ENCODE measurements at regions of chr5 and their contacts with region 1.

Region 1: GRCh38 chr5:141597394-141597793 is 21.4 kb downstream of the DIAPH1 start:
- DNase-seq: no peak
- H3K4me3 ChIP-seq: no peak overlapping the region
- H3K27ac ChIP-seq: no peak overlapping the region
- H3K4me1 ChIP-seq: peaks cover 0 to 36% (median 7%) of the 10 kb centered on the region in 4 donors
- H3K27me3 ChIP-seq: no peaks in the 10 kb centered on the region
- CTCF ChIP-seq: no peak
- EP300 ChIP-seq: no peak
- POLR2A ChIP-seq: no peak

Region 2: DNA sequence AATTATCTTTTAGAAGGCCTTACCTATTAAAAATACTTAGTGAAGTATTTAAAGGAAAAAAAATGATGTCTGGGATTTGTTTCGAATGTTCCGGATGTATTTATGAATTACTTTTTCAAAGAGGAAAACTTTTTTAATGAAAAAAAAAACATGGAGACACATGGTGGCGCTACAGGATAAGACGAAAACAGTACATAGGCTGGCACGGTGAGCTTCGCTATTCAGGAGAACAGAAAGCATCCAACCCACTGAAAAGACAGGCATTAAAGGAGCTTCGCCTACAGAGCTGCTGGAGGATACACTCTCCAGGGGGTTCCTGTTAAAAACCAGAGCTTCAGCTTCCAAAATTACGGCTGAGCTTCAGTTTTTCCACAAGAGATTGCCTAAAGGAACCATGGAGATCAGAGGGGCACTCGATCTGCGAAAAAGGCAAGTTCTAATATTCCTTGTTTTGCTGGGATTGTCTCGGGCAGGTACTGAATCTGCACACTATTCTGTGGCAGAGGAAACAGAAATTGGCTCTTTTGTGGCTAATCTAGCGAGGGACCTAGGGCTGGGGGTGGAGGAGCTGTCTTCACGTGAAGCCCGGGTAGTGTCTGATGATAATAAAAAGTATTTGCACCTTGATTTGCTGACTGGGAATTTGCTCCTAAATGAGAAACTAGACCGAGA is 374.1 kb before region 1 on chr5 and contains the start of gene PCDHB14:
- intact Hi-C with region 1: no loop called
- DNase-seq: no peak
- H3K4me3 ChIP-seq: peak within 1 kb of the TSS; percentile 27 to 44 (median 37)
- H3K27ac ChIP-seq: peak within 1 kb of the TSS in 1 of 4 donors; percentile 20
- H3K4me1 ChIP-seq: no peaks in the 10 kb centered on the region
- H3K27me3 ChIP-seq: no peaks in the 10 kb centered on the region
- CTCF ChIP-seq: peak in 1 of 3 experiments; percentile 16
- EP300 ChIP-seq: no peak
- POLR2A ChIP-seq: no peak
- total RNA-seq, gene PCDHB14: 6.8 to 9.9 (median 8.3) TPM

Region 3: GRCh38 chr5:141618804-141619554 is 21.6 kb after region 1 on chr5 and contains the start of gene DIAPH1:
- intact Hi-C with region 1: loop called (anchors 1 kb)
- DNase-seq: peak; percentile 99
- H3K4me3 ChIP-seq: peak within 1 kb of the TSS; percentile 75 to 93 (median 88)
- H3K27ac ChIP-seq: peak within 1 kb of the TSS; percentile 83 to 93 (median 91)
- H3K4me1 ChIP-seq: peaks cover 24 to 36% (median 30%) of the 10 kb centered on the region in 4 donors
- H3K27me3 ChIP-seq: no peaks in the 10 kb centered on the region
- CTCF ChIP-seq: peak; percentile 99 to 100 (median 100)
- EP300 ChIP-seq: no peak
- POLR2A ChIP-seq: peak; percentile 80
- total RNA-seq, gene DIAPH1: 34.1 to 53.0 (median 45.9) TPM

Region 4: GRCh38 chr5:141657937-141658545 is 60.6 kb after region 1 on chr5:
- intact Hi-C with region 1: no loop called
- DNase-seq: no peak
- H3K4me3 ChIP-seq: no peak overlapping the region
- H3K27ac ChIP-seq: no peak overlapping the region
- H3K4me1 ChIP-seq: no peaks in the 10 kb centered on the region
- H3K27me3 ChIP-seq: no peaks in the 10 kb centered on the region
- CTCF ChIP-seq: no peak
- EP300 ChIP-seq: no peak
- POLR2A ChIP-seq: no peak

Measured in esophagus muscularis mucosa (tissue), 4 donors.